Natural killer cell (primary cell): ENCODE measurements at regions of chr1 and their contacts with region 1.

Region 1: GRCh38 chr1:47313915-47314664 is at the start of gene STIL:
- DNase-seq: peak; percentile 92 to 98
- ATAC-seq: peak; percentile 98 to 99 (median 98)
- H3K4me3 ChIP-seq: peak within 1 kb of the TSS; percentile 93
- H3K4me3 Mint-ChIP-seq: peak within 1 kb of the TSS; percentile 100
- H3K27ac ChIP-seq: peak within 1 kb of the TSS; percentile 93
- H3K27ac Mint-ChIP-seq: peak within 1 kb of the TSS; percentile 94 to 99
- H3K4me1 ChIP-seq: peaks cover 10% of the 10 kb centered on the region
- H3K4me1 Mint-ChIP-seq: peaks cover 13 to 16% of the 10 kb centered on the region in 2 donors
- H3K27me3 ChIP-seq: no peaks in the 10 kb centered on the region
- H3K27me3 Mint-ChIP-seq: no peaks in the 10 kb centered on the region
- CTCF ChIP-seq: no peak
- total RNA-seq, gene STIL: 2.1 to 2.9 (median 2.4) TPM

Region 2: DNA sequence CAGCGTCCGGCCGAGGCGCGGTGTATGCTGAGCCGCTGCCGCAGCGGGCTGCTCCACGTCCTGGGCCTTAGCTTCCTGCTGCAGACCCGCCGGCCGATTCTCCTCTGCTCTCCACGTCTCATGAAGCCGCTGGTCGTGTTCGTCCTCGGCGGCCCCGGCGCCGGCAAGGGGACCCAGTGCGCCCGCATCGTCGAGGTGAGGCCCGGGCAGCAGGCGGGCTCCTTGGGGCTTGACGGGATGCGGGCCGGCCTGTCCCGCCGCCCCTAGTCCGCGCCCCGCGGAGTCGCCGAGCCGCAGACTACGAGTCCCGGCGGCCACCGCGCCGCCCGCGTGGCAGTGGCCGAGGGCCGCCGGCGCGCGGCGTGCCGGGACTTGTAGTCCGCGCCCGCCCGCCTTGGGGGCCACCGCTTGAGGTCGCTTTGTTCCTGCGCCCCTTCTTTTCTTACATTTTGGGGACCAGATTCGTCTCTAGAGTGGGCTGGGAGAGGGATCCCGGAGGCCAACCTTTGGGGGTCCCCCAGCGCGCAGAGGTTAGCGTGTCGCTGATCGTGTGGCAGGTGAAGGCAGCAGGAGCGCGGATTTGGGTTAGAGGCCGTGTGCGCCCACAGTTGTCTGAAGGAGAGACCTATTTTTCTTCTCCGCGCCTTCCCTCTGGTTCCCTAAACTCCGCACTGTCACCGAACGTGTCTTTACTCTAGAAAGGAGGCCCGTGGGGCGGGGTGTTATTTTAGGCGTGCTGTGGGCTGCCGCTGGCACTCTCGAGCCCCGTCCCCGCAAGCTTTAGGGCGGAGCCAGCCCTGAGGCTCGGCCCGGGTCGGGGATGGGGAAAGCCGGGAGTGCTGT is 20.1 kb after region 1 on chr1:
- intact Hi-C with region 1: loop called (anchors 1 kb)
- DNase-seq: peak; percentile 72 to 89
- ATAC-seq: peak; percentile 87 to 95 (median 89)
- H3K4me3 ChIP-seq: peak overlapping the region; percentile 98
- H3K4me3 Mint-ChIP-seq: peak overlapping the region; percentile 96
- H3K27ac ChIP-seq: peak overlapping the region; percentile 94
- H3K27ac Mint-ChIP-seq: no peak overlapping the region
- H3K4me1 ChIP-seq: peaks cover 20% of the 10 kb centered on the region
- H3K4me1 Mint-ChIP-seq: peaks cover 22 to 28% of the 10 kb centered on the region in 2 donors
- H3K27me3 ChIP-seq: no peaks in the 10 kb centered on the region
- H3K27me3 Mint-ChIP-seq: no peaks in the 10 kb centered on the region
- CTCF ChIP-seq: no peak

Region 3: DNA sequence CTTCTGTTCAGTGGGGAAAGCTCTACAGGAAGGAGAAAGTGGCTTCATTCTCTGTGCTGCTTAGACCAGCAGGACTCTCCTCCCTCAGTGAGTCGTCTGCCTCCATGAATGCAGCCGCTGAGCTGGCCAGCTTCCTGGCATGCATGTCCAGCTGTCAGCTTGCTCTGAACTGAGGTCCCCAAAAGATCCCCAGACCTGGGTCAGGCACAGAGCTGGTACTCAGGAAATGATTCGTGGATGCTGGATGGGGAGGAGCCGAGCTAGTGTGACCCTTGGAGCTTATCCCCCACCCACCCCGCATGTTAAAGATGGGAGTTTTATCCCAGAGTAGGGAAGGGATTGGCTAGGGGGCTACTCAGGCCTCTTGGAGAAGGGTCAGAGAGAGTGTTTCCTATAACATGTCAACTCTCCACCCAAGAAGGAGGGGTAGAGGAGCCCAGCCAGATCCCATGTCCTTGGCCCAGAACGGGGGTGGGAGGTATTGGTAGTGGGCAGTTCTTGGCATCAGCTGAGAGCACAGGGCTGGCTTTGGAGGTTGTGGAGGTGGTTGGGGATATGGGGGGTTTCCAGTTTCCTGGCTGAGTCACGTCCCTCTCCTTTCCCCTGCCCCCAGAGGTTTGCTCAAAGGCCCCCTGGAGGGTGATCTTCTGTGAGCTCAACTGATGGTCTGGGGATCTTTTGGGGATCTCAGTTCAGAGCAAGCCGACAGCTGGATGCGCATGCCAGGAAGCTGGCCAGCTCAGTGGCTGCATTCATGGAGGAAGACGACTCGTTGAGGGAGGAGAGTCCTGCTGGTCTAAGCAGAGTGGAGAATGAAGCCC is 233.9 kb after region 1 on chr1:
- intact Hi-C with region 1: no loop called
- DNase-seq: no peak
- ATAC-seq: no peak
- H3K4me3 ChIP-seq: no peak overlapping the region
- H3K4me3 Mint-ChIP-seq: no peak overlapping the region
- H3K27ac ChIP-seq: no peak overlapping the region
- H3K27ac Mint-ChIP-seq: no peak overlapping the region
- H3K4me1 ChIP-seq: no peaks in the 10 kb centered on the region
- H3K4me1 Mint-ChIP-seq: no peaks in the 10 kb centered on the region
- H3K27me3 ChIP-seq: no peaks in the 10 kb centered on the region
- H3K27me3 Mint-ChIP-seq: peaks cover 6 to 7% of the 10 kb centered on the region in 2 donors
- CTCF ChIP-seq: no peak

Region 4: GRCh38 chr1:47611992-47612391 is 297.9 kb after region 1 on chr1:
- intact Hi-C with region 1: no loop called
- DNase-seq: no peak
- ATAC-seq: no peak
- H3K4me3 ChIP-seq: no peak overlapping the region
- H3K4me3 Mint-ChIP-seq: no peak overlapping the region
- H3K27ac ChIP-seq: no peak overlapping the region
- H3K27ac Mint-ChIP-seq: no peak overlapping the region
- H3K4me1 ChIP-seq: no peaks in the 10 kb centered on the region
- H3K4me1 Mint-ChIP-seq: no peaks in the 10 kb centered on the region
- H3K27me3 ChIP-seq: no peaks in the 10 kb centered on the region
- H3K27me3 Mint-ChIP-seq: peaks cover 10 to 18% of the 10 kb centered on the region in 2 donors
- CTCF ChIP-seq: no peak